ENCODE measurements at regions of chr3 and their contacts with region 1.

Region 1: DNA sequence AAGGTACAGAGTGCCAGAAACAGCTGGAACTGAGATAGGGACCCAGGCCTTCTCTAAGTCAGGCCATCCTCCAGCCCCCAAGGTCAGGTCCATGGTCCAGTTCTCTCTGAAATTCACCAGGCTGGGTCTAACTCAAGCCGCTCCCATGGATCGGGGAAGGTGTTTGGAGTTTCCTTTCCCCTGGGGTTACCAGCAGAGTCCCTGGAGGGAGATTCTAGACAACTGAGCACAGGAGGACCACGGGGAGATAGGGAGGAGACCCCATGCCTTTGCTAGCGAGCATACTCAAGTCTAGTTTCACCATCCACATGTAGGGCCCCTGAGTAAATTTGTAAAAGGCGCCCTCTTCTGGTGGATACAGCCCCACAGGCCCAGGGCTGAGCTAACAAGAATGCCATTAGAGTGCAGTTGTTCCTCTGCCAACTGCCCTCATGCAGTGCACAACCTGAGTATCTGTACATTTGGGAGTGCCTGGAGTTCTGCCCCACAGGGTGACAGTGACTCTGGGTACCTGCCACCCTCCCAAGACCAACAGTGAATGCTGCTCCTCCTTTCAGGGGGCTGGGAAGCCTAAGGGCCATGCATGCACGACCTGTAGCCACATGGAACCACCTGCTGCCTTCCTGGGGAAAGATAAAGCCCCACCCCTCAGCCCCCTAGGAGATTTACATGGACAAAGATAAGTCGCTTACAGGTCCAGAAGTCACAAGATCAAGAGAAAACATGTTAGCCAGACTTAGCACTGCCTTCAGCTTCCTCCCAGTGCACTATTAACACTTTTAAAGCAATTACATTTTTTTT is 89.0 kb downstream of the IQSEC1 start:
- DNase-seq: peak; percentile 69
- H3K4me3 Mint-ChIP-seq: no peak overlapping the region
- H3K27ac Mint-ChIP-seq: no peak overlapping the region
- H3K4me1 Mint-ChIP-seq: no peaks in the 10 kb centered on the region
- H3K27me3 Mint-ChIP-seq: peaks cover 11% of the 10 kb centered on the region
- CTCF ChIP-seq: peak; percentile 42

Region 2: GRCh38 chr3:12868039-12869034 is 115.9 kb before region 1 on chr3:
- CTCF ChIA-PET with region 1: interaction called, 3 read pairs
- intact Hi-C with region 1: loop called (anchors 1 kb)
- DNase-seq: peak; percentile 81
- H3K4me3 Mint-ChIP-seq: peak overlapping the region; percentile 59
- H3K27ac Mint-ChIP-seq: no peak overlapping the region
- H3K4me1 Mint-ChIP-seq: peaks cover 20% of the 10 kb centered on the region
- H3K27me3 Mint-ChIP-seq: peaks cover 60% of the 10 kb centered on the region
- CTCF ChIP-seq: peak; percentile 70

Region 3: GRCh38 chr3:12967606-12968351 is 16.4 kb before region 1 on chr3:
- CTCF ChIA-PET with region 1: interaction called, 13 read pairs
- intact Hi-C with region 1: no loop called
- DNase-seq: peak; percentile 86
- H3K4me3 Mint-ChIP-seq: peak overlapping the region; percentile 86
- H3K27ac Mint-ChIP-seq: no peak overlapping the region
- H3K4me1 Mint-ChIP-seq: peaks cover 23% of the 10 kb centered on the region
- H3K27me3 Mint-ChIP-seq: peaks cover 25% of the 10 kb centered on the region
- CTCF ChIP-seq: no peak

Measured in Calu3 (cell line).